ENCODE measurements at regions of chr7 and their contacts with region 1.

Region 1: GRCh38 chr7:4681886-4682620 is at the start of gene FOXK1:
- DNase-seq: peak; percentile 61 to 84
- H3K4me3 ChIP-seq: peak within 1 kb of the TSS; percentile 95 to 99
- H3K27ac ChIP-seq: peak within 1 kb of the TSS; percentile 95 to 97
- H3K4me1 ChIP-seq: peaks cover 0 to 32% (median 19%) of the 10 kb centered on the region in 4 donors
- H3K27me3 ChIP-seq: no peaks in the 10 kb centered on the region
- CTCF ChIP-seq: no peak

Region 2: DNA sequence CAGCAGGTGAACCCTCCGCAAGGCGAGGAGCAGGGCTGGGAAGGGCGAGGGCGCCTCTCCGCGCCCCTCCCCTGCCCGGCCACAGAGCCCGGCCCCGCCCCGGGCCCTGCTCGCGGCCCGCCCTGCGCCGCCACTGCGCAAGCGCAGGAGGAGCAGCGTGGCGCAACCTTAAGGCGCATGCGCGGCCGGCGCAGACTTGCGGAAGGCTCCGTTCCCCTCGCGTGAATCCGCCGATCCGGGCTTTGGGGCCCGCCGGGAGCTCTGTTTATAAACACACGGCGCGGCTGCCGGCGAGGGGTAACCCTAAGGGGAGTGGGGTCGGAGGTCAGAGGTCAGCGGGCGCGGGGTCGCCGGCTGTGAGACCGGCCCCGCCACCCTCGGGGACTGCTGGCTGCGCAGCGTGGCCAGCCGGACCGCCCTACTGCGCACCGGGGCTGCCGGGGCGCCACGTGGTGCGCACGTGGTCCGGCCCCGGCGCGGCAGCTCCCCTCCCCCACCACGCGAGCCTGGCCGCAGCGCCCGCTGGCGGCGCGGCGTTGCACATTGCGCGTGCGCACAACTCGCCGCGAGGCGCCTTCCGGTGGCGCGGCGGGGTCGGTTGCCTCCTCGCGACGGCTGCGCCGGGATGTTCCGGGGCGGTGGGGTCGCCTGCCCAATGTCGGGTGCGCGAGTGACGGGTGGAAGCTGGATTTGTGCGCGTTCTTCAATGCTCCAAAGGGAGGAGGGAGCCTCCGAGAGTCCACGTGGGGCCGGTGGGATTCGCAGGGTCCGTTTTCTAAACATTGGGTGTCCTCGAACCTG is 40.2 kb before region 1 on chr7:
- intact Hi-C with region 1: loop called (anchors 5 kb)
- DNase-seq: peak; percentile 91 to 97
- H3K4me3 ChIP-seq: peak overlapping the region; percentile 64 to 69
- H3K27ac ChIP-seq: peak overlapping the region; percentile 84 to 93
- H3K4me1 ChIP-seq: peaks cover 0 to 13% (median 7%) of the 10 kb centered on the region in 4 donors
- H3K27me3 ChIP-seq: no peaks in the 10 kb centered on the region
- CTCF ChIP-seq: peak; percentile 37 to 57

Region 3: DNA sequence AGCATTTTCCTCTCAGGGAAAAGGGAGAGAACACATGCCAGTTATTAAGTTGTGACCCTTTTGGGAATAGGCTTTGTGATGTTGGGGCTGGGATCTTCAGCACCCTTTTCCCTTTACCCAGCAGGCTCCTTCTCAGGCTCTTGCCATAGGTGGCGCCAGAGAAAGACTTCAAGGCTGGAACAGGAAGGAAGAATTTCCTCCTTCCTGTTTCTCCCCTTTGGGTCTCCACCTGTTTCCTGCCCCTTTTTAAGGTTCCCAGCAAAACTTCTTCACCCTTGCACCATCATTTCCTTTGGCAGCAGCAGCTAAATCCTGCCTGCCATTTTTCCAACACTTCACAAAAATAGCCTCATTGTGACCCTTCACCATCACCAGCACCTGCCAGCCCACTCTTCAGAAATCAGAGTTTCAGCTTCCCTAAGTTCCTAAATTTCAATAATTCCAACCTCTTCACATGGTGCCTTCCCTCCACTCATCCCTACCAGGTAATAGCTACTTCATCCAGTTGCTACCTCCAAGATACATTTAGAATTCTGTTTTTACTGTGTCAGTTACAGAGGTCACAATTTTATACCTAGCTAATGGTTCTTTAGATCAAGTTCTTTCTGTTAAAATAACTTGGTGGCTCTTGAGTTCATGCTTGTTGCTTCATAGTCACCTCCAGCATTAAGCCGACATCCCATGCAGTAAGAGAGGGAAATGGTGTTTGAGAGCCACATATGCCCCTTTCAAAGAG is 22.3 kb before region 1 on chr7:
- intact Hi-C with region 1: loop called (anchors 1 kb)
- DNase-seq: no peak
- H3K4me3 ChIP-seq: no peak overlapping the region
- H3K27ac ChIP-seq: no peak overlapping the region
- H3K4me1 ChIP-seq: peaks cover 0 to 1% (median 0%) of the 10 kb centered on the region in 4 donors
- H3K27me3 ChIP-seq: no peaks in the 10 kb centered on the region
- CTCF ChIP-seq: no peak

Region 4: DNA sequence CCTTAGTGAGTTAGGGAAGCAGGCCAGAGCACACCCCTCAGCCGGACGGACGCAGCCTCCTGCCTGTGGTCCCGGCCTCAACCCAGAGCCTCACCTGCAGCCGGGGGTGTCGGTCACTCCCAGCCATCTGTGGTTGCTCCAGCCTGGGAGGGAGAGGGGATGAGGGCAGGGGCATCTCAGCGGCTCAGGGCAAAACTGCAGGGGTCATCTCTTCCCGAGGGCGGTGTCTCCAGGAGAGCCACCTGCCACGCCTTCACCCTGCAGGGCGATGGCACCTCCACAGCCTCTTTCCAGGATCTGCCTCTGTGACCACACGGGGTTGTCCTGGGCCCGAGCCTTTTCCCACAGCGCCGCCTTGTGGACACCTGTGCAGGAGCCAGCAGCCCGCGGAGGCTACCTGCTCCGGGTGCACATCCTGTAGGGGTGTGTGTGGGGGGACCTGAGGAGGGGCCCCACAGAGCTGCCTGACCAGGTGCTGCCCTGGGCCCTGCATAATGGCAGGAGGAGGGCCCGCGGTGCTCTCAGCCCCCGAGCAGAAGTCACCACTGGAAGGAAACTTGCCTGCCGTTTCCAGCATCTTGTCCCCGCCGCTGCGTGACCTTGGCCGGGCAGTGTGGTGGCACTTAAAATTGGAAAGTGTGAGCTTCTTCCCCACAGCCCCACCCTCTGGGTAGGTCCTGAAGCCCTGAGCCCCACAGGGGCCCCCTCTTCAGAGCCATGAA is 71.8 kb after region 1 on chr7:
- intact Hi-C with region 1: loop called (anchors 5 kb)
- DNase-seq: peak; percentile 56 to 84
- H3K4me3 ChIP-seq: no peak overlapping the region
- H3K27ac ChIP-seq: peak overlapping the region in 1 of 2 donors; percentile 27
- H3K4me1 ChIP-seq: peaks cover 0 to 35% (median 16%) of the 10 kb centered on the region in 4 donors
- H3K27me3 ChIP-seq: no peaks in the 10 kb centered on the region
- CTCF ChIP-seq: peak; percentile 85 to 91

Region 5: GRCh38 chr7:5005066-5005465 is 323.0 kb after region 1 on chr7:
- intact Hi-C with region 1: no loop called
- DNase-seq: no peak
- H3K4me3 ChIP-seq: no peak overlapping the region
- H3K27ac ChIP-seq: no peak overlapping the region
- H3K4me1 ChIP-seq: no peaks in the 10 kb centered on the region
- H3K27me3 ChIP-seq: no peaks in the 10 kb centered on the region
- CTCF ChIP-seq: no peak